ENCODE measurements at regions of chr6 and their contacts with region 1.

Region 1: GRCh38 chr6:18264219-18264922 is at the start of gene DEK:
- DNase-seq: peak; percentile 64 to 85 (median 78)
- ATAC-seq: peak; percentile 84
- H3K4me3 ChIP-seq: peak within 1 kb of the TSS; percentile 71
- H3K4me3 Mint-ChIP-seq: peak within 1 kb of the TSS; percentile 90 to 99 (median 94)
- H3K27ac ChIP-seq: peak within 1 kb of the TSS; percentile 83
- H3K27ac Mint-ChIP-seq: peak within 1 kb of the TSS; percentile 91 to 98 (median 96)
- H3K4me1 ChIP-seq: peaks cover 26 to 33% of the 10 kb centered on the region in 2 donors
- H3K4me1 Mint-ChIP-seq: peaks cover 39 to 55% (median 51%) of the 10 kb centered on the region in 7 donors
- H3K27me3 ChIP-seq: no peaks in the 10 kb centered on the region
- H3K27me3 Mint-ChIP-seq: no peaks in the 10 kb centered on the region
- total RNA-seq, gene DEK: 49.6 to 174 (median 101) TPM

Region 2: GRCh38 chr6:17706580-17707370 is 557.6 kb before region 1 on chr6 and contains the start of gene NUP153:
- CTCF ChIA-PET with region 1: no interaction called
- POLR2A ChIA-PET with region 1: no interaction called
- intact Hi-C with region 1: loop called (anchors 1 kb)
- DNase-seq: peak; percentile 98 to 100 (median 99)
- ATAC-seq: peak; percentile 85
- H3K4me3 ChIP-seq: peak within 1 kb of the TSS; percentile 94
- H3K4me3 Mint-ChIP-seq: peak within 1 kb of the TSS; percentile 86 to 97 (median 94)
- H3K27ac ChIP-seq: peak within 1 kb of the TSS; percentile 100
- H3K27ac Mint-ChIP-seq: peak within 1 kb of the TSS; percentile 92 to 98 (median 95)
- H3K4me1 ChIP-seq: peaks cover 24 to 28% of the 10 kb centered on the region in 2 donors
- H3K4me1 Mint-ChIP-seq: peaks cover 13 to 53% (median 37%) of the 10 kb centered on the region in 7 donors
- H3K27me3 ChIP-seq: no peaks in the 10 kb centered on the region
- H3K27me3 Mint-ChIP-seq: peaks cover 0 to 2% (median 0%) of the 10 kb centered on the region in 5 donors
- total RNA-seq, gene NUP153: 47.7 to 90.9 (median 53.0) TPM

Region 3: DNA sequence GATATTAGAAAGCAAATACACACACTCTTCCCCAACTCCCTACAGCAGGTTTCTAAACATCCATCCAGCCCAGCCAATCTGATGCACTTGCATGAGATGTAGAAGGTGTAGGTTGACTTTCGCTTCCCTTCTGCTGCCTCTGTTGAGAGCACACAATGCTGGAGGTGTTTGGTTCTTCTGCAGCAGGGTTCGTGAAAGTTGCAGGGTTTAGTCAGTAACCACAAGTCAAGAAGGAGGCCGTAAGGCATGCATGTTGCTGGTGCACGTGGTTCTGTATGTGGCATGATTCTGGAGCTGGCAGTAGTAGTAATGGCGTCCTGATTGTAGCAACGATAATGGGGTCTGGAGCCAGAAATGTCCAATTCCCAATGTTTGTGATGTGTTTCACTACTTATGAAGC is 53.0 kb before region 1 on chr6:
- CTCF ChIA-PET with region 1: no interaction called
- POLR2A ChIA-PET with region 1: no interaction called
- intact Hi-C with region 1: loop called in 1 of 2 experiments (anchors 10 kb)
- DNase-seq: no peak
- ATAC-seq: no peak
- H3K4me3 ChIP-seq: no peak overlapping the region
- H3K4me3 Mint-ChIP-seq: peak overlapping the region in 1 of 10 donors; percentile 14
- H3K27ac ChIP-seq: no peak overlapping the region
- H3K27ac Mint-ChIP-seq: peak overlapping the region in 1 of 9 donors; percentile 13
- H3K4me1 ChIP-seq: no peaks in the 10 kb centered on the region
- H3K4me1 Mint-ChIP-seq: peaks cover 0 to 16% (median 4%) of the 10 kb centered on the region in 7 donors
- H3K27me3 ChIP-seq: no peaks in the 10 kb centered on the region
- H3K27me3 Mint-ChIP-seq: no peaks in the 10 kb centered on the region

Region 4: DNA sequence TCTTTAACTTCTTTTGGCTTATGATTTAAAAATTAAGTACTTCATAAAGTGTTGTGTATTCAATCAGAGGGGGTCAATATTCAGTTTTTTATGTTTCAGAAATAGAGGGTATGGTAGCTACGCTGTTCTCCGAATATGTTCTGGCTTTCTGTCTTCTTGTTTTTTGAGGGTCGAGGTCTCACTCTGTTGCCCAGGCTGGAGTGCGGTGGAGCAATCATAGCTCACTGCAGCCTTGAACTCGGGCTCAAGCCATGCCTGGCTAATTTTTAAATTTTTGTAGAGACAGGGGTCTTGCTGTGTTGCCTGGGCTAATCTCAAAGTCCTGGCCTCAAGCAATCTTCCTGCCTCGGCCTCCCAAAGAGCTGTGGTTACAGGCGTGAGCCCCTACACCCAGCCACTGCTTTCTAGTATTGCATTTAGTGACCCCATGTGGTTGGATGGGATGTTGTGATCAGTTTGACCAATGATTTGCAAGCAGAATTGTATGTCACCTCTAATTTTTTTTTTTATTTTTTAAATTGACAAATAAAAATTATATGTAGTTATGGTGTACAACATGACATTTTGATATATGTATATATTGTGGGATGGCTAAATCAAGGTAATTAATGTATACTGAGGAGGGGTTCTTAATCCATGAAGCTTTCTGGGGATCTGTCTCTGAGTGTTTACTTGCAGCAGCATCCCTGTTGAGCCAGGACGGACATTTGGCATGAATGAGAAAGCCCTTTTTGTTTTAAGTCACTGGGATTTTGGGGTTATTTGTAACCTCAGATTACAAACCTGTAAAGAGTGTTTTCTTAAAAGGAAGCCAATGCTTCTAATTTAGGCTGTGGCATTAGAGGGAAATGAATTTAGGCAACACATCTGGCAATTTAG is 38.4 kb after region 1 on chr6:
- CTCF ChIA-PET with region 1: no interaction called
- POLR2A ChIA-PET with region 1: no interaction called
- intact Hi-C with region 1: loop called in 1 of 2 experiments (anchors 2 kb)
- DNase-seq: no peak
- ATAC-seq: no peak
- H3K4me3 ChIP-seq: no peak overlapping the region
- H3K4me3 Mint-ChIP-seq: no peak overlapping the region
- H3K27ac ChIP-seq: no peak overlapping the region
- H3K27ac Mint-ChIP-seq: no peak overlapping the region
- H3K4me1 ChIP-seq: no peaks in the 10 kb centered on the region
- H3K4me1 Mint-ChIP-seq: no peaks in the 10 kb centered on the region
- H3K27me3 ChIP-seq: no peaks in the 10 kb centered on the region
- H3K27me3 Mint-ChIP-seq: peaks cover 0 to 6% (median 0%) of the 10 kb centered on the region in 5 donors

Region 5: GRCh38 chr6:18387061-18387721 is 122.8 kb after region 1 on chr6 and contains the start of gene RNF144B:
- CTCF ChIA-PET with region 1: no interaction called
- POLR2A ChIA-PET with region 1: no interaction called
- intact Hi-C with region 1: loop called in 1 of 2 experiments (anchors 1 kb)
- DNase-seq: peak; percentile 41 to 73 (median 67)
- ATAC-seq: peak; percentile 92
- H3K4me3 ChIP-seq: peak within 1 kb of the TSS; percentile 70
- H3K4me3 Mint-ChIP-seq: peak within 1 kb of the TSS; percentile 90 to 100 (median 99)
- H3K27ac ChIP-seq: peak within 1 kb of the TSS; percentile 69
- H3K27ac Mint-ChIP-seq: peak within 1 kb of the TSS; percentile 2 to 95 (median 92)
- H3K4me1 ChIP-seq: peaks cover 4 to 18% of the 10 kb centered on the region in 2 donors
- H3K4me1 Mint-ChIP-seq: peaks cover 15 to 48% (median 35%) of the 10 kb centered on the region in 7 donors
- H3K27me3 ChIP-seq: no peaks in the 10 kb centered on the region
- H3K27me3 Mint-ChIP-seq: peaks cover 0 to 21% (median 0%) of the 10 kb centered on the region in 5 donors
- total RNA-seq, gene RNF144B: 1.5 to 23.5 (median 7.9) TPM

Measured in naive thymus-derived CD4-positive, alpha-beta T cell (primary cell).